CD8-positive, alpha-beta T cell (primary cell): ENCODE measurements at regions of chr13 and their contacts with region 1.

Region 1: GRCh38 chr13:111184458-111185401 is 69.6 kb downstream of the ARHGEF7 start:
- DNase-seq: peak in 8 of 9 experiments; percentile 43 to 82 (median 66)
- ATAC-seq: peak; percentile 48
- H3K4me3 ChIP-seq: peak overlapping the region; percentile 5 to 22
- H3K4me3 Mint-ChIP-seq: peak overlapping the region; percentile 75
- H3K27ac ChIP-seq: peak overlapping the region; percentile 42 to 48
- H3K27ac Mint-ChIP-seq: peak overlapping the region; percentile 95
- H3K4me1 ChIP-seq: peaks cover 93% of the 10 kb centered on the region
- H3K4me1 Mint-ChIP-seq: peaks cover 100% of the 10 kb centered on the region
- H3K27me3 ChIP-seq: no peaks in the 10 kb centered on the region
- H3K27me3 Mint-ChIP-seq: no peaks in the 10 kb centered on the region
- CTCF ChIP-seq: no peak

Region 2: GRCh38 chr13:111153279-111153976 is 31.3 kb before region 1 on chr13:
- CTCF ChIA-PET with region 1: interaction called, 4 read pairs
- POLR2A ChIA-PET with region 1: interaction called, 4 read pairs
- intact Hi-C with region 1: loop called (anchors 1 kb)
- DNase-seq: peak; percentile 86 to 96 (median 94)
- ATAC-seq: peak; percentile 81
- H3K4me3 ChIP-seq: peak overlapping the region; percentile 67 to 96
- H3K4me3 Mint-ChIP-seq: peak overlapping the region; percentile 96
- H3K27ac ChIP-seq: peak overlapping the region; percentile 75 to 79
- H3K27ac Mint-ChIP-seq: peak overlapping the region; percentile 96
- H3K4me1 ChIP-seq: peaks cover 20% of the 10 kb centered on the region
- H3K4me1 Mint-ChIP-seq: peaks cover 34% of the 10 kb centered on the region
- H3K27me3 ChIP-seq: no peaks in the 10 kb centered on the region
- H3K27me3 Mint-ChIP-seq: no peaks in the 10 kb centered on the region
- CTCF ChIP-seq: no peak

Region 3: DNA sequence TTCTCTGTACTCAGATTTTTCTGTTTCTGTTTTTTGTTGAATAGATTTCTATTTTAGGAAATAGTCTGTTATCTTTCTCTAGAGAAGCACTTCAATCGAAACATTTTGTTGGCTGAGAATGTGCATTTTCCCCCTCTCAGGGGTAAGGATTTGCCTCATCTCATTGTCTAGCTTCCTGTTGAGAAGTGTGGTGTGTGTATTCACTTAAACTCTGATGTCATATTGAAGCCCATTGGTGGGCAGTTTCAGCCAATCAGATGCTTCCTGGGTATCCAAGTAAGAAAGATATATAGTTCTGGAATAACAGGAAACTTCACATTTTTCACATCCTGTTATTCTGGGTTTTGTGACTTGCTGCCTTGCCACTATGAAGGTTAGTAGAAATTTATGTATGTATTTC is 18.0 kb after region 1 on chr13:
- CTCF ChIA-PET with region 1: interaction called, 5 read pairs
- POLR2A ChIA-PET with region 1: interaction called, 7 read pairs
- intact Hi-C with region 1: loop called in 1 of 2 experiments (anchors 2 kb)
- DNase-seq: peak in 3 of 9 experiments; percentile 29 to 65 (median 45)
- ATAC-seq: peak; percentile 86
- H3K4me3 ChIP-seq: no peak overlapping the region
- H3K4me3 Mint-ChIP-seq: no peak overlapping the region
- H3K27ac ChIP-seq: no peak overlapping the region
- H3K27ac Mint-ChIP-seq: peak overlapping the region; percentile 20
- H3K4me1 ChIP-seq: peaks cover 46% of the 10 kb centered on the region
- H3K4me1 Mint-ChIP-seq: peaks cover 79% of the 10 kb centered on the region
- H3K27me3 ChIP-seq: no peaks in the 10 kb centered on the region
- H3K27me3 Mint-ChIP-seq: no peaks in the 10 kb centered on the region
- CTCF ChIP-seq: no peak

Region 4: DNA sequence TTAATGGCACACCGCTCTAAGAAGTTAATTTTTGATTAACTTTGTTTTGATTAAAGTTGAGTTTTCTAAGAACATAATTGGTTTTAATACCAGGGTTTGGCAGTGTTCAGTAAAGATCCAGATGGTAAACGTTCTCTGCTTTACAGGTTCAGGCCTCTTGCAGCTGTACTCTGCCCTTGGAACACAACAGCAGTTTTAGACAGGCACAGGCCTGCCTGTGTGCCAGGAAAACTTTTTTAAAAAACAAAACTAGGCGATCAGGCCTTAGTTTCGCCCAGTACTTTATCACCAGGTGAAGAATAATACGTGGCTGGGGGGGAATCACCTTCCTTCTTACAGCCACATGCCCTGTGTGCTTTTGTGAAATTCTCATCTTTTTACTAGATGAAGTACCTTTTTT is 97.7 kb after region 1 on chr13:
- CTCF ChIA-PET with region 1: no interaction called
- POLR2A ChIA-PET with region 1: no interaction called
- intact Hi-C with region 1: no loop called
- DNase-seq: no peak
- ATAC-seq: no peak
- H3K4me3 ChIP-seq: no peak overlapping the region
- H3K4me3 Mint-ChIP-seq: no peak overlapping the region
- H3K27ac ChIP-seq: no peak overlapping the region
- H3K27ac Mint-ChIP-seq: no peak overlapping the region
- H3K4me1 ChIP-seq: no peaks in the 10 kb centered on the region
- H3K4me1 Mint-ChIP-seq: no peaks in the 10 kb centered on the region
- H3K27me3 ChIP-seq: no peaks in the 10 kb centered on the region
- H3K27me3 Mint-ChIP-seq: no peaks in the 10 kb centered on the region
- CTCF ChIP-seq: no peak

Region 5: GRCh38 chr13:111518161-111518792 is 333.5 kb after region 1 on chr13:
- CTCF ChIA-PET with region 1: no interaction called
- POLR2A ChIA-PET with region 1: no interaction called
- intact Hi-C with region 1: no loop called
- DNase-seq: peak in 1 of 9 experiments; percentile 2
- ATAC-seq: no peak
- H3K4me3 ChIP-seq: no peak overlapping the region
- H3K4me3 Mint-ChIP-seq: no peak overlapping the region
- H3K27ac ChIP-seq: no peak overlapping the region
- H3K27ac Mint-ChIP-seq: no peak overlapping the region
- H3K4me1 ChIP-seq: no peaks in the 10 kb centered on the region
- H3K4me1 Mint-ChIP-seq: no peaks in the 10 kb centered on the region
- H3K27me3 ChIP-seq: no peaks in the 10 kb centered on the region
- H3K27me3 Mint-ChIP-seq: peaks cover 7% of the 10 kb centered on the region
- CTCF ChIP-seq: no peak